ENCODE measurements at regions of chr7 and their contacts with region 1.

Region 1: DNA sequence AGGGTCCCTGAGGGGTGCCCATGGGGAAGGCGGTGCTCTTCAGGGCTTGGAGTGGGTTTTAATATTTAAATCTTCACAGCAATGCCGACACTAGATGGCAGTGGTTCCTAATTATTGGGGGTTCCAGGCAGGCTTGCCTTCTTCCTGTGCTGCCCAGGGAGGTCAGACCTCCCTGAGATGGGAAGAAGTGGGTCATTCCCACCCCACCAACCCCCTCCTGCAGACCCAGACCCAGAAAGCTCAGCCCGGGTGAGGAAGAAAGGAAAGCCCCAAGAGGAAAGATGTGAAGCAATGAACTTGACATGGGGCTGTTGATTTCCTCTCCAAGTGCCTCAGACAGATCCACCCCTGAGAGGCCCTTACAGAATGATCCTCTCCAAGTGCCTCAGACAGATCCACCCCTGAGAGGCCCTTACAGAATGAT is 85.1 kb upstream of the LANCL2 start:
- DNase-seq: peak; percentile 67 to 73
- ATAC-seq: peak; percentile 90 to 97
- H3K4me3 ChIP-seq: no peak overlapping the region
- H3K27ac ChIP-seq: no peak overlapping the region
- H3K4me1 ChIP-seq: no peaks in the 10 kb centered on the region
- CTCF ChIP-seq: peak; percentile 78
- EP300 ChIP-seq: no peak
- POLR2A ChIP-seq: no peak
- RAD21 ChIP-seq: peak; percentile 88 to 92

Region 2: DNA sequence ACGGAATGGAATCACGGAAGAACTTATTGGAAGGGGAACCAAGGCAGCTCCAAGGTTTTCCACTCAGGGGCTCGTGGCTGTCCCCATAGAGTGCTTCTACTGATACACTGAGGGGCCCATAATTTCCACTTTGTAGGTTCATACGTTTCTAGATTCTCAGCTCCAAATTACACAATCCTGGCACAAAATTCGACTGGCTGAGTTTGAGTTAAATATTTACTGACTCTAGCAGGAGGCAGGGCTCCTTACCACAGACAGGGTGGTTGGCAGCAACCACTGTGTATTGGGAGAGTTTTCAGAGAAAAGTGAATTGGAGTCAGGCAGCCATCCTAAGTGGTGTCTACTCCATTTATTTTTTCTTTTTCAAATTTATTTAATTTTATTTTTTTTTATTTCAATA is 465.6 kb before region 1 on chr7:
- CTCF ChIA-PET with region 1: no interaction called
- POLR2A ChIA-PET with region 1: no interaction called
- DNase-seq: peak in 1 of 2 experiments; percentile 13
- ATAC-seq: peak in 1 of 2 experiments; percentile 71; a peak in 4 of 6 replicates
- H3K4me3 ChIP-seq: no peak overlapping the region
- H3K27ac ChIP-seq: peak overlapping the region; percentile 51 to 52
- H3K4me1 ChIP-seq: peaks cover 32% of the 10 kb centered on the region
- CTCF ChIP-seq: no peak
- EP300 ChIP-seq: no peak
- POLR2A ChIP-seq: no peak
- RAD21 ChIP-seq: no peak

Region 3: GRCh38 chr7:55309040-55309991 is 29.3 kb after region 1 on chr7:
- CTCF ChIA-PET with region 1: interaction called, 17 read pairs
- POLR2A ChIA-PET with region 1: no interaction called
- DNase-seq: no peak
- ATAC-seq: no peak
- H3K4me3 ChIP-seq: no peak overlapping the region
- H3K27ac ChIP-seq: no peak overlapping the region
- H3K4me1 ChIP-seq: no peaks in the 10 kb centered on the region
- CTCF ChIP-seq: no peak
- EP300 ChIP-seq: no peak
- POLR2A ChIP-seq: no peak
- RAD21 ChIP-seq: no peak

Region 4: DNA sequence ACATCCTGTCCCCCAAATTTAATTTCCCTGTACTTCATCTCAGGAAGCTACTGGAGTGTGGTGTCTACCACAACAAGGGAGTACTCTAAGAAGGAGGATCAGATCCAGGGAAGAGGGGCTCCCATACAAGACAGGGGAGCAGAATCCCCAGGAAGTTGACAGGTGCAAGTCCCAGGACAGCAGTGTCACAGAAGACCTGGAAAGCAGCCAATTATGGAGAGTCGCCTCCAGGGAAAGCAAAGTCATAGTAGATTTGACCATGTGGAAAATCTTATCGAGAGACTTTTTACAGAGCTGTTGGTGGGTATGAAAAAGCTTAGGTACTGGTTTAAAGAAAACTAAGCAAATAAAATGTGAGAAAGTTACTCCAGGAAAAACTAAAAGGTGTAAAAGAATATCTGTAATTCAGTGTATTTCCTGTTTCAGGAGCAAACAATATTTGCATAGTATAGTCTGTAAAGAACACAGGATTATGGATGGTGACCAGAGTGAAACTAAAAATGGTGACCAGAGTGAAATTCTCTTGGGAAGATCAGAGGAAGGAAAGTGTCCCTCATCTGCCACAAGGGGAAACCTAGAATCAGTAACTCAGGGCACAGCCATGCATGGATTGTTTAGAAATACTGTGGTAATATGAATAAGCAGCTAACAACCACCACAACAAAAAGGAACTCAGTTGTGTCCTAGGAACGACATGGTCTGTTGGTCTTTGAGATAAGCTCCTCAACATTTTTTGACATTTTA is 129.6 kb after region 1 on chr7:
- CTCF ChIA-PET with region 1: interaction called, 136 read pairs
- POLR2A ChIA-PET with region 1: no interaction called
- DNase-seq: peak in 1 of 2 experiments; percentile 19
- ATAC-seq: peak; percentile 68; a peak in 4 of 6 replicates
- H3K4me3 ChIP-seq: no peak overlapping the region
- H3K27ac ChIP-seq: no peak overlapping the region
- H3K4me1 ChIP-seq: no peaks in the 10 kb centered on the region
- CTCF ChIP-seq: no peak
- EP300 ChIP-seq: no peak
- POLR2A ChIP-seq: no peak
- RAD21 ChIP-seq: no peak

Measured in A549 (cell line).